Heart left ventricle (tissue), 16 donors: ENCODE measurements at regions of chr17 and their contacts with region 1.

Region 1: GRCh38 chr17:35373534-35373983 is at the start of gene SLFN11:
- DNase-seq: peak; percentile 90 to 92 (median 91)
- ATAC-seq: peak; percentile 91 to 98 (median 93)
- H3K4me3 ChIP-seq: peak within 1 kb of the TSS; percentile 27 to 82 (median 72)
- H3K27ac ChIP-seq: peak within 1 kb of the TSS; percentile 92 to 98 (median 95)
- H3K4me1 ChIP-seq: peaks cover 0 to 65% (median 13%) of the 10 kb centered on the region in 12 donors
- H3K27me3 ChIP-seq: peaks cover 0 to 20% (median 0%) of the 10 kb centered on the region in 9 donors
- CTCF ChIP-seq: no peak
- POLR2A ChIP-seq: peak; percentile 84 to 98
- total RNA-seq, gene SLFN11: 15.3 to 46.0 (median 17.5) TPM

Region 2: DNA sequence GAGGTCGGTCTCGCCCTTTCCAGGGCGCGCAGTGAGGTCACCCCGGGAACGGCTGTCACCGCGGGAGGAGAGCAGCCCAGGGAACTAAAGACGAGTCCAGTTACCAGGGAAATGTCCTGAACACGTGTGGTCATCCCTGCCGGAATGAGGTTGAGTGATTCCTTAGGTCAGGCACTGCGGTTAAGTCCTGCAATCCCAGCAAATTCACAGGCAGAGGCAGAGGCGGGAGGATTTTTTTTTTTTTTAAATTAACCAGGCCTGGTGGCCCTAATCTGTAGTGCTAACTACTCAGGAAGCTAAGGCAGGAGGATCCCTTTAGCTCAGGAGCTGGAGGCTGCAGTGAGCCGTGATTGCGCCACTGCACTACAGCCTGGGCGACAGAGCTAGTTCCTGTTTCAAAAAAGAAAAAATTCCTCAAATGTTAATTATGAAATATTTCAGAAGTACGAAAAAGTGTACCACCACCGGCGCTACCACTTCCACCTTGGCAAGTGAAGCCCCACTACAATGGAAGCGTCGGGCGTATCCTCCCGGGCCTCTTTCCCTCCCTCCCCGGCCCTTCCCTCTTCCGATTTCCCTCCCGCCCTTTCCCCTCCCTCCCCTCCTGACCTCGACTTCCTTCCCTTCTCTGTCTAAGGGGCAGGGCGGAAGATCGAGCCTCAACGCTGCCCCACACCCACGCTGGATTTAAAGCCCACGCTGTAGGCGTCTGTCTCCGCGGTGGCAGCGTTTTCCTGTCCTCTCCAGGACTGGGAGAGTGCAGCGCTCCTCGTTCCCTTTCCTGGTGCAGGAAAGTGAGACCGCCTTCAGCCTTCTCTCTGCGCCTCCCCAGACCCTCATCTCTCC is 27.4 kb before region 1 on chr17:
- intact Hi-C with region 1: loop called in 3 of 10 experiments (anchors 2 kb)
- DNase-seq: peak; percentile 85 to 89 (median 88)
- ATAC-seq: peak; percentile 90 to 95 (median 92)
- H3K4me3 ChIP-seq: peak overlapping the region in 11 of 12 donors; percentile 6 to 60 (median 48)
- H3K27ac ChIP-seq: peak overlapping the region; percentile 68 to 91 (median 80)
- H3K4me1 ChIP-seq: peaks cover 0 to 52% (median 18%) of the 10 kb centered on the region in 12 donors
- H3K27me3 ChIP-seq: peaks cover 0 to 14% (median 0%) of the 10 kb centered on the region in 9 donors
- CTCF ChIP-seq: no peak
- POLR2A ChIP-seq: peak in 1 of 2 donors; percentile 33

Region 3: GRCh38 chr17:35432176-35433074 is 58.9 kb after region 1 on chr17 and contains the start of gene SLFN12:
- intact Hi-C with region 1: loop called in 6 of 10 experiments (anchors 1 to 10 kb)
- DNase-seq: peak in 4 of 5 donors; percentile 61 to 74 (median 68)
- ATAC-seq: peak; percentile 70 to 93 (median 89)
- H3K4me3 ChIP-seq: peak within 1 kb of the TSS; percentile 49 to 81 (median 68)
- H3K27ac ChIP-seq: peak within 1 kb of the TSS; percentile 86 to 97 (median 93)
- H3K4me1 ChIP-seq: peaks cover 0 to 42% (median 19%) of the 10 kb centered on the region in 12 donors
- H3K27me3 ChIP-seq: no peaks in the 10 kb centered on the region
- CTCF ChIP-seq: no peak
- POLR2A ChIP-seq: peak in 1 of 2 donors; percentile 51
- total RNA-seq, gene SLFN12: 3.3 to 10.0 (median 4.5) TPM

Region 4: DNA sequence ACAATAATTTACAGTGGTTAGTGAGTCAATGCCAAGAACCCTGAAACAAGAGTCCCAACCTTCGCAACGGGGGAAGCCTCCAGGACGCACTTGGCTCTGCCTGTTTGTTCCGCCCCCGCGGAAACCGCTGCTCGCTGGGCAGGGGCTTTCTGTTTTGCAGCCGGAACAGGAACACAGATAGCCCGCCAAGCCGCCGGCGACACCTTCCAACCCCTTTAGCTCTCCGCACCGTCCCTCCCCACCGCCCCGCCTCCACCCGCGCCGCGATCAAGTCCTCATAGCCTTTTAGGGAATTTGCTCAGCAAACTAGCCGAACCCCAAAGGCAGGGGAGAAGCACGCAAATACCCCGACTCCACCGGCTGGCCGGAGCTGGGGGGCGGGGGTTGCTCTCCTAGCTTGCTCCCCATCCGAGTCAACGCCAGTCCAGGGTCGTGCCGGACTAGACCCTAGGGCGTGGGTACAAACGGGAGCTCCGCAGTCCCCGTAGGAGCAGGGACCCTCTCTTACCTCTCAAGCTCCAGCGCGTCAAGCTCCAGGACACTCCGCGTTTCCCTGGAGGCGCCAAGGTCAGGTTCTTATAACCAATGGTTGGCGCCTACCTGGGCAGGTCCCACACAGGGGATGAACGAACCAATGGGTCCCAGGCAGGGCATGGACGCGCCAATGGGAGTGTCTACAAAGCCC is 74.8 kb after region 1 on chr17 and contains the start of gene SLFN13:
- intact Hi-C with region 1: loop called in 1 of 10 experiments (anchors 5 kb)
- DNase-seq: peak; percentile 87 to 91 (median 88)
- ATAC-seq: peak; percentile 80 to 95 (median 91)
- H3K4me3 ChIP-seq: peak within 1 kb of the TSS; percentile 1 to 79 (median 57)
- H3K27ac ChIP-seq: peak within 1 kb of the TSS in 11 of 12 donors; percentile 35 to 86 (median 65)
- H3K4me1 ChIP-seq: peaks cover 0 to 24% (median 6%) of the 10 kb centered on the region in 12 donors
- H3K27me3 ChIP-seq: peaks cover 0 to 30% (median 6%) of the 10 kb centered on the region in 9 donors
- CTCF ChIP-seq: no peak
- POLR2A ChIP-seq: no peak
- total RNA-seq, gene SLFN13: 0.94 to 14.8 (median 4.5) TPM

Region 5: DNA sequence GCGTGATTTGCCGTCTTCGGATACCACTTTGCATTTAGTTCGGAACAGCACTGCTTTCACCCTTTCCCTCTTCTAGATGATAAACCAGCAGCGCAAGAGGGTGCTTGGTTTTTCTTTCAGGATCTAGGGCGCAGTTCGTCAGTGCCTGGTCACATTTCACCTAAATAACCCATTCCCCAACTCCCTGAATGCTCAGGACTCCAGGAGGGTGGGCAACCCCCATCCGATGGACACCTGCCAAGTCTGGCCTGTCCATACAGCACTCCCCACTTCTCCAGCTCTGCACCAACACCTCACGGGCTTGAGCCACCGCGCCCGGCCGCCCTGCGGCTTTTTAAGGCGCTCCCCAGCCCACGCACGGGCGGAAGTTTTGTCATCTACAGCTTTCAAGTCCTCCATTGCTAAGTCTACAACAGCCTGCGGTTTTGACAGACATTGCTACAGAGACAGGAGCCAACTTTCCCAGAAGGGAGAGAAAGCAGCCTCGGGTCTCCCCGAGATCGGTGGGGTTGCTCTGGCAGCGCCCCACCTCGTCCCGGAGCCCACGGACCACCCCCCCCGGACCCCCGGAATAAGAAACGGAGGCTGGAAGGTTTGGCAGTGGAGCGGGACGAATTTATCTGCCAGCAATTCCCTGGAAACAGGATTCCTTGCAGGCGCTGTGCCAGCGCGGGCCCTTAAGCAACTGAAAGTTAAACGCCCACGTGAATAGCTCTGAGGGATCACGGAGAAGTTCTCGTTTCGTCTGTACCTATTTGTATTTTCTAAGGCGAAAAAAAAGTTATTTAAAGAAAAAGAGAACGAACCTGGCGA is 113.6 kb after region 1 on chr17:
- intact Hi-C with region 1: loop called in 2 of 10 experiments (anchors 5 kb)
- DNase-seq: peak; percentile 50 to 75 (median 61)
- ATAC-seq: peak in 3 of 4 donors; percentile 76 to 87 (median 85)
- H3K4me3 ChIP-seq: peak overlapping the region; percentile 38 to 77 (median 59)
- H3K27ac ChIP-seq: peak overlapping the region in 11 of 12 donors; percentile 4 to 61 (median 44)
- H3K4me1 ChIP-seq: peaks cover 0 to 24% (median 6%) of the 10 kb centered on the region in 12 donors
- H3K27me3 ChIP-seq: peaks cover 9 to 58% (median 41%) of the 10 kb centered on the region in 9 donors
- CTCF ChIP-seq: no peak
- POLR2A ChIP-seq: no peak